ENCODE measurements at regions of chr22 and their contacts with region 1.

Region 1: DNA sequence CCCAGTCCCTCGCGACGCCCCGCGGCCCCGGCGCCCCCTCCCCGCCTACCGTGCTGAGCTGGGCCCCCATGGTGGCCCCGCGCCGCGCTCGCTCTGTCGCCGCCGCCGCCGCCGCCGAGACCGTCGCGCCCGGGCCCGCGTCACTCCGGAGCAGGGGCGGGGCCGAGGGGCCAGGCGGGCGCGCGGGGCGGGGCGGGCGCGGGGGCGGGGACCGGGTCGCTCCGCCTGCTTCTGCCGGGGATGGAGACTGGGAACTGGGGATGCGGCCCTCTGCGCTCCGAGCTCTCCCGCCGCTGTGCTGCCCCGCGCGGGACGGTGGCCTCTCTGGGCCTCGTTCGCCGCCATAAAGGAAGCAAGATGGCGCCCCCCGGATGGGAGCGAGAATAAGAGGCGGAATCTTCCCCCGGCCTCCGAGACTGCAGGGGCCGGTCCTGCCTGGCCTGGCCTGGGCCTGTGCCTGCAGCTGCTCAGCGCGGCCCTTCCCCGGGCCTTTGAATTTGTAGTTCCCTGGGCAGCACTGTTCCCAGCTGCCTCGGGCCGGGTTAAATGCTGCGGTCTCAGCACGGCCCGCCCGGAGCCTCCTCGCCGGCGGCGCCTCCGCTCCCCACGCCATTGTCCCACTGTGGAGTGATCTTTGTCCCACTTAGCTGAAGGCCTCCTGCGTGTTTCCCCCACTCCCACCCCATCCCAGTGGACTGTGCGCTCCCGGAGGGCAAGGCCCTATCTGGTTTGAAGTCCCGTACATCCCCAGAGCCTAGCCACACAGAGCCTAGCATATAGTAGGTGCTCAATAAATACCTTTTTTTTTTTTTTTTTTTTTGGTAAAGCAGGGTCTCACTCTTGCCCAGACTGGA is at the start of gene CYB5R3:
- DNase-seq: peak; percentile 50 to 90
- H3K4me3 ChIP-seq: peak within 1 kb of the TSS; percentile 82 to 98 (median 90)
- H3K27ac ChIP-seq: peak within 1 kb of the TSS; percentile 82; the same call in 1 of the 2 replicates
- H3K4me1 ChIP-seq: peaks cover 3 to 15% (median 11%) of the 10 kb centered on the region in 4 experiments
- H3K27me3 ChIP-seq: no peaks in the 10 kb centered on the region; a peak in 1 of 7 replicates
- CTCF ChIP-seq: no peak
- EP300 ChIP-seq: 0 out of 3 replicates have a peak, but pooled peaks of 1 of the 2 experiments have one; percentile 16
- POLR2A ChIP-seq: peak in 1 of 2 experiments; percentile 77; a peak in 2 of 3 replicates
- RAD21 ChIP-seq: no peak
- total RNA-seq, gene CYB5R3: 75.3 and 82.5 TPM in 2 replicates

Region 2: GRCh38 chr22:42662114-42663021 is 12.9 kb after region 1 on chr22:
- CTCF ChIA-PET with region 1: interaction called, 11 read pairs
- POLR2A ChIA-PET with region 1: interaction called, 10 read pairs
- DNase-seq: peak in 1 of 2 experiments; percentile 94
- H3K4me3 ChIP-seq: peak overlapping the region; percentile 31 to 74 (median 54)
- H3K27ac ChIP-seq: no peak overlapping the region
- H3K4me1 ChIP-seq: no peaks in the 10 kb centered on the region
- H3K27me3 ChIP-seq: peaks cover 0 to 11% (median 10%) of the 10 kb centered on the region in 4 experiments; a peak in 5 of 7 replicates
- CTCF ChIP-seq: peak; percentile 71 to 89 (median 72)
- EP300 ChIP-seq: 0 out of 3 replicates have a peak, but pooled peaks of 1 of the 2 experiments have one; percentile 28
- POLR2A ChIP-seq: peak in 1 of 2 experiments; percentile 32; a peak in 1 of 3 replicates
- RAD21 ChIP-seq: peak; percentile 78 to 80